ENCODE measurements at regions of chr17 and their contacts with region 1.

Region 1: DNA sequence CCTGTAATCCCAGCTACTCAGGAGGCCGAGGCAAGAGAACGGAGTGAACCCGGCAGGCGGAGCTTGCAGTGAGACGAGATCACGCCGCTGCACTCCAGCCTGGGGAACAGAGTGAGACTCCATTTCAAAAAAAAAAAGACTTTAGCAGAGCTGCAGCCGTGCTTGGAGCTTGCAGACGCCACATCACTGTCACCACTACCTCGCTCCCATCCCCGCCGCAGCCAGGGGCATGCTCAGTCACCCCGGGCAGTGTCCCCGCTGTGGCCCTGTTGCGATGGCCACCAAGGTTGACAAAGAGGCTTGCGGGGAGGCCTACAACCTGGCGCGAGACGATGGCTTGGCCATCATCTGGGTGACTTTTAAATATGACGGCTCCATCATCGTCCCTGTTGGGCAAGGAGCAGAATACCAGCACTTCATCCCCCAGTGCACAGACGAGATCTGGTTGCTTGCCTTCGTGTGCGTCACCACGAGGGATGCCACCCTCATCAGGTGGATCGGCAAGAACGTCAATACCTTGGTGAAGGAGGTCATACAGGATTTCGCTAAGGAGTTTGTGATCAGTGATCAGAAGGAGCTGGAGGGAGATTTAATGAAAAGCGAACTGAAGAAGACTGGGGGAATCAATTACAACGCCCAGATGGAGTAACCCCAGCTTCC is 118.1 kb downstream of the TNFRSF13B start:
- DNase-seq: no peak
- H3K4me3 ChIP-seq: no peak overlapping the region
- H3K27ac ChIP-seq: no peak overlapping the region
- H3K4me1 ChIP-seq: no peaks in the 10 kb centered on the region
- H3K27me3 ChIP-seq: no peaks in the 10 kb centered on the region
- CTCF ChIP-seq: no peak
- EP300 ChIP-seq: no peak
- POLR2A ChIP-seq: no peak

Region 2: DNA sequence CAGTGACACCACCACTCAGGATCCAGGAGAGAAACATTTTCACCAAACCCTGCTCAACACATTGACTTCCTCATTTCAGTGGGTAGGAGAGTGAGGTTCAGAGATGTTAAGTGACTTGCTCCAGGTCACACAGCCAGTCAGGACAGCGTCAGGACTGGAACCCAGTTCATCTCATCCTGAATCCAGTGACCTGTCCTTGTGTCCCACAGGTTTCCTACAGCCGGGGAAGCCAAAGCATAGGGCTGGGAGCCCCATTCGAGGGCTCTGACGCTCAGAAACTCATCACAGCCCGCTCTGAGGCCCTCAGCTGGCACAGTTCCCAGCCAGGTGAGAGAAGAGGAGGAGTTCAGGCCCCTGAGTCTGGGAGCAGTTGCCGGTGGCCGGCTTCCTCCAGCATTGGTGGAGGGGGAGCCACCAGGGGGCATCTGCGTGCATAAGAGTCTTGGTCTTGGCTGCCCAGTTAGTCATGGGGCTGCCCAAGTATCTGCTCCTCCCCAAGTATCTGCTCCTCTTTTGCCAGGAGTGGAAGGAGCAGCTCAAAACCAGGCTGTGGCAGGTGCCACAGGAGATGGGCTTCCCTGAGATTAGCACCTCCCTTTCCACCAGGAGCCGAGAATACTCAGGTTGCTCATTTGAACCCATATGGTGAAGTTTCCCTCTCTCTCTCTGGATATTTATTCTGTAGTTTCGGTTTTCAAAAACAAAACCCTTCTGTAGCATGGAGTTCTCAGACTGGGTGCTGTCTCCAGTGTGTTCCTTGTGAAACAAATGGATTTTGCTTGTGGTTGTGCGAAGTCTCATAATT is 62.2 kb after region 1 on chr17:
- intact Hi-C with region 1: loop called in 1 of 4 experiments (anchors 10 kb)
- DNase-seq: no peak
- H3K4me3 ChIP-seq: no peak overlapping the region
- H3K27ac ChIP-seq: no peak overlapping the region
- H3K4me1 ChIP-seq: no peaks in the 10 kb centered on the region
- H3K27me3 ChIP-seq: no peaks in the 10 kb centered on the region
- CTCF ChIP-seq: no peak
- EP300 ChIP-seq: no peak
- POLR2A ChIP-seq: no peak

Region 3: GRCh38 chr17:16954521-16954920 is 100.7 kb after region 1 on chr17:
- intact Hi-C with region 1: no loop called
- DNase-seq: no peak
- H3K4me3 ChIP-seq: no peak overlapping the region
- H3K27ac ChIP-seq: no peak overlapping the region
- H3K4me1 ChIP-seq: no peaks in the 10 kb centered on the region
- H3K27me3 ChIP-seq: no peaks in the 10 kb centered on the region
- CTCF ChIP-seq: no peak
- EP300 ChIP-seq: no peak
- POLR2A ChIP-seq: no peak